Activated B cell treated with CpG ODN at 0.5 μM for 24 hours (primary cell): ENCODE measurements at regions of chr13 and their contacts with region 1.

Region 1: GRCh38 chr13:46577696-46578589 is 25.0 kb downstream of the LRCH1 start:
- DNase-seq: no peak
- ATAC-seq: peak; percentile 41
- H3K4me3 Mint-ChIP-seq: peak overlapping the region; percentile 65
- H3K27ac Mint-ChIP-seq: peak overlapping the region; percentile 90
- H3K4me1 Mint-ChIP-seq: peaks cover 87% of the 10 kb centered on the region
- H3K27me3 Mint-ChIP-seq: no peaks in the 10 kb centered on the region
- CTCF ChIP-seq: no peak

Region 2: DNA sequence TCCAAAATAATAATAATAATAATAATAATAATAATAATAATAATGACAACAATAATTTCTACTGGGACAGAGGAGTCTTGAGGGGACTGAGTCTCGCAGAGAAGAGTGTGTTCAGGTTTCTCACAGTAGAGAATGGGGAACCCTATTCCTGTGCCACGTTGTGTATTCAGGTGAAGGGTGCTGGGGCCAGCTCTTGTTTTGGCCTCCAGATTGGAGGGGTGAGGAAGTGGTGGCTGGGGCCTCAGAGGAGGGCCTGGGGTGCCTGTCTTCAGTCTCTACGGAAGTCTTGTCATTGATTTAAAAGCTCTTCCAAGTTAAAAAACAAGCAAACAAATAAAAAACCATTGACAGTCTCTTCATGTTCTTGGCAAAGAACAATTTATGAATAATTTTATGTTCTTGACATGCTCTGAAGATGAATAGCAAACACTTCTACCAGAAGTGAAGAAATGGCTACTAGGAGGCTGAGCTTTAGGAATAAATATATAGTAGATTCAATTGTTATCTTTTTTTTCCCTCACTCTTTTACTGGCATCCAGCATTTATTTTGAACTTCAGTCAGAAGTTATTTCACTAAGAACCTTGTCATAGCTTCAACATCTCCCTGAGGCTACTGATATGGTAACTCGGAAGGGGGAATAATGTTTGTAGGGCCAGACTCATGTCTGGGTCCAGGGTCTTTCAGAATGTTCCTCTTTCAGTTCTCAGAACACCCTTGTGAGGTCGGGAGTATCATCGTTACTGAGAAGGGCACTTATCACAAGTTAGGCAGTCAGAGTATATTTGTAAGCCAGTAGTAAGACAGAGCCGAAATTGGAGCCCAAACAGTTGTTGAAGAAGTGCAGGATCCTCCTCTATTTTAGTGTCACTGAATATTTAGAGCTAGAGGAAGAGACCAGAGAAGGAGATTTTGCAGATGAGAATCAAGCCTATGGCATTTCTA is 11.9 kb before region 1 on chr13:
- CTCF ChIA-PET with region 1: no interaction called
- POLR2A ChIA-PET with region 1: interaction called, 10 read pairs
- intact Hi-C with region 1: loop called (anchors 1 kb)
- DNase-seq: no peak
- ATAC-seq: peak; percentile 82
- H3K4me3 Mint-ChIP-seq: no peak overlapping the region
- H3K27ac Mint-ChIP-seq: peak overlapping the region; percentile 14
- H3K4me1 Mint-ChIP-seq: peaks cover 65% of the 10 kb centered on the region
- H3K27me3 Mint-ChIP-seq: no peaks in the 10 kb centered on the region
- CTCF ChIP-seq: no peak

Region 3: DNA sequence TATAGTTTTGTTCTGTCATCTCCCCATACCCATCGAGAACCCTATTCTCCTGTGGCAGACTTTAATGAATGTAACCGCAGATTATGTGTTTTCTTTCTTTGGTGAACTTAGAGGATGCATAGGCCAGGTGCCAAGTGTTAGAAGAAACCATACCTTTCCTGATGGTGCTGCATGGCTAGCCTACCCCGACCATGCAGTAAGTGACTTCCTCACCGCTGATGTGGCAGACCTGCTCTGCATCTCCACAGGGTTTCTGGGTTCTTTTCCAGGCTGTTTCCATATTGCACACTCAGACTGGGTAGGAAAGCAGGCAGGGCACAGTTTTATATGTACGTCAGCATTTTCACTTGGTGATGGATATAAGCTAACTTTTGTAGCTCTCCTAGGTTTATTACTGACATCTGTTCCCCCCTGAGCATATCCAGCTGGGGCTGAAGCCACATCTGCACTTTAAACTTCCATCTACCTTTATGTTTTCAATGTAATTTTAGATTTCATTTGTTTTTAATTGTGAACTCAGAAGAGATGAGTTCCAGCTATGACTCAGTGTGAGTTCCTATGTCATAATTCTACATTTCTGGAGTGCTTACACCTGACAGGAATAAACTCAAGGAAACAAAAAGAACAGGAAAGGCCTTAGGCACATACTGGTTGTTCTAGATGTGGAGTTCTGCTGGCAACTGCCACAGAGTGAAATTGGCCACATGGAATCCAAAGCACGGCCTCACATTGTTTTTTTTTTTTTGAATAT is 17.4 kb after region 1 on chr13:
- CTCF ChIA-PET with region 1: interaction called, 3 read pairs
- POLR2A ChIA-PET with region 1: interaction called, 8 read pairs
- intact Hi-C with region 1: loop called (anchors 1 kb)
- DNase-seq: no peak
- ATAC-seq: peak; percentile 74
- H3K4me3 Mint-ChIP-seq: peak overlapping the region; percentile 60
- H3K27ac Mint-ChIP-seq: peak overlapping the region; percentile 86
- H3K4me1 Mint-ChIP-seq: peaks cover 95% of the 10 kb centered on the region
- H3K27me3 Mint-ChIP-seq: no peaks in the 10 kb centered on the region
- CTCF ChIP-seq: no peak

Region 4: DNA sequence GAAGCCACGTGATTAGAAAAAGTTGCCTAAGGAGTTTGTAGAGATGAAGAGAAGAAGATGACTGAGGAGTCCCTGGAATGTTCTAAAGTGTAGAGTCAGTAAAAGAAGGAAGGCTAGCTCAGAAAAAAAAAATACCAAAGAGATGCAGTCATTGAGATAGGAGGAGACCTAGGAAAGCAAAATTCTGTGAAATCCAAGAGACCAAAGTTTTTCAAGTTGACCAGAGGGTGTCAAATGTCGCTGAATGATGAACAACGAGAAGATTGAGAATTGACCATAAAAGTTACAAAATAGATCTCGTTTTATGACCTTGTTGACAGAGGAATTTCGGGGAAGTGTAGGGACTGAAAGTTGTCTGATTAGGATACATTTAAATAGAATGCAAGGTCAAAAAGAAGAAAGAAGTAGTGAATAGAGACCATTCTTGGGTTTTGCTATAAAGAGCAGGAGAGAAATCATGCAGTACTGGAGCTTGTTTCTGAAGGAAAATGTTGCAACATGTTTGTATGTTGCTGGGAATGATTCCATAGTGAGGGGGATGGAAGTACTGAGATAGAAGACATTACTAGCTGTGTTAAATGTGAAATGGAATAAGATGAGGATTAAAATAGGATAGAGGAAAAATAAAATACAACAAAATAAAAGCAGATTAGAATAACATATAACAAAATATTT is 349.1 kb after region 1 on chr13:
- CTCF ChIA-PET with region 1: no interaction called
- POLR2A ChIA-PET with region 1: no interaction called
- intact Hi-C with region 1: no loop called
- DNase-seq: no peak
- ATAC-seq: no peak
- H3K4me3 Mint-ChIP-seq: no peak overlapping the region
- H3K27ac Mint-ChIP-seq: no peak overlapping the region
- H3K4me1 Mint-ChIP-seq: no peaks in the 10 kb centered on the region
- H3K27me3 Mint-ChIP-seq: peaks cover under 1% of the 10 kb centered on the region
- CTCF ChIP-seq: no peak